B cell (primary cell): ENCODE measurements at regions of chr20 and their contacts with region 1.

Region 1: DNA sequence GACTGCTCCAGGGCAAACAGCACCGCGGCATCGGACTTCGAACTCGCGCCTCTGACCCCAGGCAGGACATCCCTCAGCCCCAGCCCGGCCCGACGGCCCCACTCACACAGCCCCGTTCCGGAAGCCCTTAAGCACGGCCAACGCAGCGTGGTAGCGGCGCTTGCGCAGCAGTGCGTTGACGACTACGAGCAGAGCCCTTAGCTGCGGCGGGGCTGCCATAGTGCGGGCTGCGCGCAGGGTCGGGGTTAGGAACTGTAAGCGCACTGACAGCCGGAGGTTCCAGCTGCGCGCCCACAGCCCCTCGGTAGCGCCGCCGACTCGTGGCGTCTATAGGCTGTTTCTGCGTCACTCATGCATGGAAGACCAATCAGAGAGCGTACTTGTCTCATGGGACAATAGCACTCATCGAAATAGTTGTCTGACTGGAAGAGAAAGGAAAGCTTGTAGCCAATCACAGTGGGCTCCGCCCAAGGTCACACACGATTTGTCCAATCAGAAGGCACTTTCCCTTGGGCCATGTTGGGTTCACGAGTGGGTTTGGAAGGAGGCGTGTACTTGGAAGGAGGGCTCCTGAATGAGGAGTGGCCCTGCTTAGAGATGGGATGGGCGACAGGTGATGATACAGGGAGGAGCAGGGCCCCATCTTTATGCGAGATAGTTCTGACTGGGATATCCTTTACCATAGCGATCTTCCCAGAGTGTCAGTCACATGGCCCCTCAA is at the start of gene PXMP4:
- DNase-seq: peak; percentile 93
- ATAC-seq: peak; percentile 97
- H3K4me3 ChIP-seq: peak within 1 kb of the TSS; percentile 36 to 90 (median 85)
- H3K4me3 Mint-ChIP-seq: peak within 1 kb of the TSS; percentile 90
- H3K27ac ChIP-seq: peak within 1 kb of the TSS; percentile 43 to 53
- H3K27ac Mint-ChIP-seq: peak within 1 kb of the TSS; percentile 85
- H3K4me1 ChIP-seq: peaks cover 8 to 16% of the 10 kb centered on the region in 2 donors
- H3K4me1 Mint-ChIP-seq: peaks cover 14% of the 10 kb centered on the region
- H3K27me3 ChIP-seq: no peaks in the 10 kb centered on the region
- H3K27me3 Mint-ChIP-seq: no peaks in the 10 kb centered on the region
- CTCF ChIP-seq: no peak
- total RNA-seq, gene PXMP4: 6.6 and 6.8 TPM in 2 replicates

Region 2: DNA sequence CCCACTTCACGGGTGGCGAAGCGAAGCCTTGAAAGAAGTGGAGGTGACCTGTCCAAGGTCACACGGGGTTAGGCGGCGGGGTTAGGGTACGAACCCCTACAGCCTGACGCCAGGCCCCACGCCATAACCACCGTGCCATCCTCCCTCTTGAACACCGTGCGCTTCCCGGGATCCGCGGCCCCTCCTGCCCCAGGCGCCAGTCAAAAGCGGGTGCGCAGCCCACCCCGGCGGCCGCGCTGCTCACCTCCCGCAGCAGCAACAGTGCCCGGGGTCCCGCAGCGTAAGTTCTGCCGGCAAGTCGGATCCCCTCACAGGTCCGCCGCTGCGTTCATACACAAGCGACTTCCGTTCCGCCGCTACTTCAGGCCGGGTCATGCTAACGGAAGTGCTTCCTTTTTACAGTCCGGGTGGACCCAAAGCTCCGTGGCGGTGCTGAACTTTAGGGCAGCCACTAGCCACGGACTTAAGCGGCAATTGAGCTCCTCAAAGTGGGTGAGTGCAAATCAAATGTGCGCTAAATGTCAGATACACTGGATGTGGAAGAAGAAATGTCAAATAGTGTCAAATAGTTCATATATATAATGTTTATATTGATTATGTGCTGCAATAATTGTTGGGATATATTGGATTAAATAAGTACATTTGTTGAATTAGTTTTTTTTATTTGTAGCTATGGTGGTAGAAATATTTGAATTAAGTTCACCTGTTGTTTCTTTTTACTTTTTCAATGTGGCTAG is 318.8 kb before region 1 on chr20 and contains the start of gene CDK5RAP1:
- CTCF ChIA-PET with region 1: no interaction called
- POLR2A ChIA-PET with region 1: no interaction called
- intact Hi-C with region 1: loop called (anchors 1 kb)
- DNase-seq: peak; percentile 91
- ATAC-seq: peak; percentile 98
- H3K4me3 ChIP-seq: peak within 1 kb of the TSS; percentile 89 to 99 (median 93)
- H3K4me3 Mint-ChIP-seq: peak within 1 kb of the TSS; percentile 96
- H3K27ac ChIP-seq: peak within 1 kb of the TSS; percentile 14 to 71
- H3K27ac Mint-ChIP-seq: peak within 1 kb of the TSS; percentile 89
- H3K4me1 ChIP-seq: peaks cover 19 to 34% of the 10 kb centered on the region in 2 donors
- H3K4me1 Mint-ChIP-seq: peaks cover 45% of the 10 kb centered on the region
- H3K27me3 ChIP-seq: no peaks in the 10 kb centered on the region
- H3K27me3 Mint-ChIP-seq: no peaks in the 10 kb centered on the region
- CTCF ChIP-seq: no peak
- total RNA-seq, gene CDK5RAP1: 50.4 and 52.6 TPM in 2 replicates

Region 3: GRCh38 chr20:33475381-33476150 is 244.6 kb before region 1 on chr20:
- CTCF ChIA-PET with region 1: no interaction called
- POLR2A ChIA-PET with region 1: interaction called, 10 read pairs
- intact Hi-C with region 1: no loop called
- DNase-seq: no peak
- ATAC-seq: peak; percentile 14
- H3K4me3 ChIP-seq: no peak overlapping the region
- H3K4me3 Mint-ChIP-seq: peak overlapping the region; percentile 5
- H3K27ac ChIP-seq: no peak overlapping the region
- H3K27ac Mint-ChIP-seq: no peak overlapping the region
- H3K4me1 ChIP-seq: peaks cover 10% of the 10 kb centered on the region in 2 donors
- H3K4me1 Mint-ChIP-seq: peaks cover 12% of the 10 kb centered on the region
- H3K27me3 ChIP-seq: no peaks in the 10 kb centered on the region
- H3K27me3 Mint-ChIP-seq: no peaks in the 10 kb centered on the region
- CTCF ChIP-seq: no peak

Region 4: DNA sequence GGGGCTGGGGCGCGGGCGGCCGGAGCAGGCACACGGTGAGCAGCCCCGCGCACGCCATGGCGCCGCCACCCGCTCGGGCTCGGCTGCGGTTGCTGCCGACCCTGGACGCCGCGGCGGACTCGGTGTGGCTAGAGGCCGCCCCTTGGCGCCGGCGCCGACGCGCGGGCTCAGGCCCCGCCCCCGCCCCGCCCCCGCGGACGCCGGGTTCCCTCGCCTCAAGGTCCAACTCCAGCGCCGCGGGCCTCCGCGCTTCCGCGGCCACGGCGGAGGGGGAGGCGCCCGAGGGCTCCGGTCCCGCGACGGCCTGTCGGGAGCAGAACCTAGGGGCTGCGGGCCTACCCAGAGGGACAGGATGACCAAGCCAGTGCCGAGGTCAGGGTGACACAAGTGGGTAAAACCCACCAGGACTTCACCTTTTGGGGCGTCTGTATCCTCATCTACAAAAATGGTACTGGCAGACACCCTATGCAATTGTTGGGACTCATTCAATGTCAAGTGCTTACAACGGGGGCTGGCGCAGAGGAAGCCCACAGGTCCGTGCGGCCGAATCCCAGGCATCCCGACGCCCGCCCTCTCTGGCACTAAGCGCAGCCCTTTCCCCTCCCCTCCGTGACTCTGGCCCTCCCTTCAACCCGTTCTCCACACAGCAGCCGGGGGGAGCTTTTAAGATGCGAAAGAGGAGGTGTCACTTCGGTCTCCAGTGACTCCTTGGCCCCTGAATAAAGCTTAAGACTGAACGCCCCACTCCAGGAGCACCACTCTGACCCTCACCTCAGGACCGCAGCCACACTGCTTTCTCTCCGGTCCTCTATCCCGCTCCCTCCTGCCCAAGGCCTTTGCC is 45.6 kb before region 1 on chr20 and contains the start of gene NECAB3:
- CTCF ChIA-PET with region 1: interaction called, 3 read pairs
- POLR2A ChIA-PET with region 1: interaction called, 3 read pairs
- intact Hi-C with region 1: loop called (anchors 2 kb)
- DNase-seq: peak; percentile 71
- ATAC-seq: peak; percentile 94
- H3K4me3 ChIP-seq: peak within 1 kb of the TSS; percentile 36 to 66 (median 51)
- H3K4me3 Mint-ChIP-seq: peak within 1 kb of the TSS; percentile 84
- H3K27ac ChIP-seq: no peak within 1 kb of the TSS
- H3K27ac Mint-ChIP-seq: peak within 1 kb of the TSS; percentile 57
- H3K4me1 ChIP-seq: peaks cover 23 to 28% of the 10 kb centered on the region in 2 donors
- H3K4me1 Mint-ChIP-seq: peaks cover 30% of the 10 kb centered on the region
- H3K27me3 ChIP-seq: no peaks in the 10 kb centered on the region
- H3K27me3 Mint-ChIP-seq: no peaks in the 10 kb centered on the region
- CTCF ChIP-seq: no peak
- total RNA-seq, gene NECAB3: 11.8 and 19.3 TPM in 2 replicates

Region 5: GRCh38 chr20:33686100-33686983 is 33.8 kb before region 1 on chr20 and contains the start of gene E2F1:
- CTCF ChIA-PET with region 1: interaction called, 3 read pairs
- POLR2A ChIA-PET with region 1: no interaction called
- intact Hi-C with region 1: loop called (anchors 1 kb)
- DNase-seq: peak; percentile 95
- ATAC-seq: peak; percentile 96
- H3K4me3 ChIP-seq: peak within 1 kb of the TSS; percentile 28 to 56 (median 47)
- H3K4me3 Mint-ChIP-seq: peak within 1 kb of the TSS; percentile 92
- H3K27ac ChIP-seq: peak within 1 kb of the TSS; percentile 50 to 65
- H3K27ac Mint-ChIP-seq: peak within 1 kb of the TSS; percentile 89
- H3K4me1 ChIP-seq: peaks cover 16 to 22% of the 10 kb centered on the region in 2 donors
- H3K4me1 Mint-ChIP-seq: peaks cover 27% of the 10 kb centered on the region
- H3K27me3 ChIP-seq: no peaks in the 10 kb centered on the region
- H3K27me3 Mint-ChIP-seq: no peaks in the 10 kb centered on the region
- CTCF ChIP-seq: peak; percentile 33
- total RNA-seq, gene E2F1: 2.4 and 2.7 TPM in 2 replicates

Region 6: GRCh38 chr20:33781133-33781532 is 61.0 kb after region 1 on chr20:
- CTCF ChIA-PET with region 1: interaction called, 5 read pairs
- POLR2A ChIA-PET with region 1: interaction called, 6 read pairs
- intact Hi-C with region 1: loop called (anchors 1 kb)
- DNase-seq: no peak
- ATAC-seq: no peak
- H3K4me3 ChIP-seq: no peak overlapping the region
- H3K4me3 Mint-ChIP-seq: peak overlapping the region; percentile 42
- H3K27ac ChIP-seq: peak overlapping the region; percentile 95 to 97
- H3K27ac Mint-ChIP-seq: peak overlapping the region; percentile 93
- H3K4me1 ChIP-seq: peaks cover 75 to 93% of the 10 kb centered on the region in 2 donors
- H3K4me1 Mint-ChIP-seq: peaks cover 74% of the 10 kb centered on the region
- H3K27me3 ChIP-seq: no peaks in the 10 kb centered on the region
- H3K27me3 Mint-ChIP-seq: no peaks in the 10 kb centered on the region
- CTCF ChIP-seq: no peak

Region 7: GRCh38 chr20:33992923-33993575 is 272.9 kb after region 1 on chr20:
- CTCF ChIA-PET with region 1: interaction called, 3 read pairs
- POLR2A ChIA-PET with region 1: no interaction called
- intact Hi-C with region 1: loop called (anchors 1 kb)
- DNase-seq: peak; percentile 99
- ATAC-seq: peak; percentile 84
- H3K4me3 ChIP-seq: peak overlapping the region; percentile 94 to 99 (median 98)
- H3K4me3 Mint-ChIP-seq: peak overlapping the region; percentile 92
- H3K27ac ChIP-seq: peak overlapping the region; percentile 90 to 91
- H3K27ac Mint-ChIP-seq: peak overlapping the region; percentile 99
- H3K4me1 ChIP-seq: peaks cover 40 to 48% of the 10 kb centered on the region in 2 donors
- H3K4me1 Mint-ChIP-seq: peaks cover 59% of the 10 kb centered on the region
- H3K27me3 ChIP-seq: no peaks in the 10 kb centered on the region
- H3K27me3 Mint-ChIP-seq: no peaks in the 10 kb centered on the region
- CTCF ChIP-seq: no peak